K562 (cell line): ENCODE measurements at regions of chr16 and their contacts with region 1.

Region 1: DNA sequence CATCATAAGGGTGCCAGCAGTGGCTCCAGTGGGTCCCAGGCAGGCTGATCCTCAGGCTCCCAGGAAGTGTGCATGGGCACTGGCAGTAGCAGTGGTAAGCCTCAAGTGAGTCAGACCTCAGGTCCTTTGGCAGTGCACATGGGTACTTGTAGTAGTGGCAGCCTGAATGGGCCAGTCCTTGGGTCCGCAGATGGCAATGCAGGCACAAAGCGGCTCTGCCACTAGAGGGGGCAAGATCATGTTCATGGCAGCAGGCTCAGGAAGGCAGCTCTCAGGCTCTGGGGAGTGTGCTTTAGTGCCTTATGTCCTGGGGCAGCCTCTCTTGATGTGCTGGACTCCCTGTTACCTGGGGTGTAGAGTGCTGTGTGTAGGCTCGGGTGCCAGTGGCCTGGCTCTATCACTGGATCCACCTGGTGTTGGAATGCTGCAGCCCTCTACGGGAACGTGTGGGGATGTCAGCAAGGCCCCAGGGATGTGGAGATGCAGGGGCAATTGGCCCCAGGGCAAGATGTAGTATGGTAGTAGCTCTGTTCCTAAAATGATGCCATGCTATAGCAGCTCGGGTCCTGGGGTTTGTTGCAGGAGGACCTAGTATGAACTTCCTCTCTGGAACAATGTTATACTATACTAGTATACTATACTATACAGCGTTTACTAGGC is 11.0 kb downstream of the ACSM3 start:
- DNase-seq: peak; percentile 54 to 73 (median 56)
- ATAC-seq: peak; percentile 97
- H3K4me3 ChIP-seq: no peak overlapping the region
- H3K27ac ChIP-seq: no peak overlapping the region
- H3K4me1 ChIP-seq: peaks cover 0 to 5% of the 10 kb centered on the region in 2 experiments; a peak in 2 of 5 replicates
- H3K27me3 ChIP-seq: no peaks in the 10 kb centered on the region
- CTCF ChIP-seq: peak; percentile 66 to 76 (median 67)
- EP300 ChIP-seq: no peak
- POLR2A ChIP-seq: no peak
- RAD21 ChIP-seq: peak in 1 of 2 experiments; percentile 53; a peak in 2 of 4 replicates

Region 2: DNA sequence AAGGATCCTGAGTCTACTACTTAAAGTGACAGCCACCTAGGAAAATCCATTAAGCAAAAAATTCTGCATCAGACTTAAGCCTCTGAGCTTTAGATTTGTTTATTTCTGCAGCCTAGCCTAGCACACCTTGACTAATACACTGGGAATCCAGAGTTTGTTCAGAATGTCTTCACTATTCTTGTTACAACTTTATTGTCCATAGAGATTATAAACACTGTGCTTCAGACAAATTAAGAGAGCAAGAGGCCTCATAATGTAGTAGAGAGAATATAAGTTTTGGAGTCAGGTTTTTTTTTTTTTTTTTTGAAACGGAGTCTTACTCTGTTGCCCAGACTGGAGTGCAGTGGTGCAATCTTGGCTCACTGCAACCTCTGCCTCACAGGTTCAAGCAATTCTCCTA is 24.3 kb before region 1 on chr16:
- CTCF ChIA-PET with region 1: no interaction called
- POLR2A ChIA-PET with region 1: no interaction called
- in situ Hi-C with region 1: no loop called
- intact Hi-C with region 1: no loop called
- DNase-seq: no peak
- ATAC-seq: no peak
- H3K4me3 ChIP-seq: no peak overlapping the region
- H3K27ac ChIP-seq: 0 out of 3 replicates have a peak overlapping the region, but pooled peaks have one; percentile 34
- H3K4me1 ChIP-seq: peaks cover 13 to 49% of the 10 kb centered on the region in 2 experiments; a peak in 4 of 5 replicates
- H3K27me3 ChIP-seq: no peaks in the 10 kb centered on the region
- CTCF ChIP-seq: no peak
- EP300 ChIP-seq: no peak
- POLR2A ChIP-seq: no peak
- RAD21 ChIP-seq: no peak

Region 3: GRCh38 chr16:20791923-20792612 is 17.2 kb after region 1 on chr16:
- CTCF ChIA-PET with region 1: no interaction called
- POLR2A ChIA-PET with region 1: interaction called, 11 read pairs
- in situ Hi-C with region 1: no loop called
- intact Hi-C with region 1: no loop called
- DNase-seq: no peak
- ATAC-seq: no peak
- H3K4me3 ChIP-seq: no peak overlapping the region
- H3K27ac ChIP-seq: no peak overlapping the region
- H3K4me1 ChIP-seq: no peaks in the 10 kb centered on the region
- H3K27me3 ChIP-seq: no peaks in the 10 kb centered on the region
- CTCF ChIP-seq: no peak
- EP300 ChIP-seq: no peak
- POLR2A ChIP-seq: no peak
- RAD21 ChIP-seq: no peak

Region 4: DNA sequence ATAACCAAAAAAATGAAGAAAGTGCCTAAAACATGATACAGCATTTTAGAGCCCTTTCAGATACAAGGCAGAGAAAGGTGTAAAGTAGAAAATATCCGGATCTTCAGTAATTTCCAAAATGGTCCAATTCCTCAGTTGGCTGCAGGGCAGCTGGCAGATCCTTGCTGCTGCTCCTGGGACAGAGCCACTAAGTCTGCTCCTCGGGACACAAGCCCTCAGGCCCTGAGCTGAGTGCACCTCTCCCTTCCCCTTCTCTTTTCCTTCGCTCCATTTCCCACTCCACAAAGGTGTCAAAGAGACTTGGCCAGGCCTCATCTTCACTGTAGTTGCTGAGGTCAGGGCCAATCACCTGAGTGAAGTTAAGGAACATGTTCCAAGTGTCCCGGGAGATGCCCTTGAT is 84.9 kb after region 1 on chr16:
- CTCF ChIA-PET with region 1: no interaction called
- POLR2A ChIA-PET with region 1: no interaction called
- in situ Hi-C with region 1: no loop called
- intact Hi-C with region 1: no loop called
- DNase-seq: no peak
- ATAC-seq: no peak
- H3K4me3 ChIP-seq: no peak overlapping the region
- H3K27ac ChIP-seq: no peak overlapping the region
- H3K4me1 ChIP-seq: no peaks in the 10 kb centered on the region
- H3K27me3 ChIP-seq: no peaks in the 10 kb centered on the region
- CTCF ChIP-seq: no peak
- EP300 ChIP-seq: no peak
- POLR2A ChIP-seq: no peak
- RAD21 ChIP-seq: no peak

Region 5: GRCh38 chr16:20904507-20905079 is 129.8 kb after region 1 on chr16:
- CTCF ChIA-PET with region 1: no interaction called
- POLR2A ChIA-PET with region 1: no interaction called
- in situ Hi-C with region 1: no loop called
- intact Hi-C with region 1: no loop called
- DNase-seq: no peak
- ATAC-seq: no peak
- H3K4me3 ChIP-seq: no peak overlapping the region
- H3K27ac ChIP-seq: peak overlapping the region; percentile 19; the same call in 1 of the 3 replicates
- H3K4me1 ChIP-seq: peaks cover 28 to 32% of the 10 kb centered on the region in 2 experiments
- H3K27me3 ChIP-seq: no peaks in the 10 kb centered on the region
- CTCF ChIP-seq: no peak; a peak in 1 of 6 replicates
- EP300 ChIP-seq: peak; percentile 5; the same call in 1 of the 2 replicates
- POLR2A ChIP-seq: no peak
- RAD21 ChIP-seq: no peak; a peak in 1 of 4 replicates